ENCODE measurements at regions of chr2 and their contacts with region 1.

Region 1: DNA sequence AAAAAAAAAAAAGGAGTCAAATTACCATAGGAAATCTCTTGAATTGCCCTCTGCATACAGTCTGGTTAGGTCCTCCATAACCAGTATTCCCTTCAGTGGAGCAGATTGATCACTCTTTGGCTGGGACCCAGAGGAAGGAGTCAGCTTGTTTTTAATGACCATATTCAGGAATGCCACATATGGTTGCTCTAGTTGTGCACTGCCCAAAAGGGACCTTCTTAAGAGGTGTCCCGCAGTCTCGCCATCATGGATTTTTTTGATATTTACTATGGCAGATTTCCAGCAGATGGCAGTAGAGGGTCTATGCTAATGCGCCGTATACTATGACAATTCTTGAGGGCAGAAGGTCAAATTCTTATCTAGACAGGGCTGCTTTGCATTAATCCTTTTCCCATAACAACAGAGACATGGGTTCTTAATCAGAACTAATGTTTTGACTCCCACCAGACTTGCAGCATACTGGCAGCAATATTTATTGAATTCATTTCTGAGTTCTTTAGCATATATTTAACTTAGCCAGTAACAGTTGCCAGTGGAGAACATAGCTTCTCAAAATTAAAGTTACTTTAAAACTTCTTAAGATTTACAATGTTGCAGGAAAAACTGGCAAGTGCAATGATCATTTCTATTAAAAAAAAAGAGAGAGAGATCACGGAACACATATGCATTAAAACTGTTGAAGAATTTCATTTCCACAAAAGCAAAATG is 31.8 kb upstream of the INPP4A start:
- DNase-seq: no peak
- ATAC-seq: peak; percentile 86
- H3K4me3 Mint-ChIP-seq: no peak overlapping the region
- H3K27ac Mint-ChIP-seq: no peak overlapping the region
- H3K4me1 Mint-ChIP-seq: no peaks in the 10 kb centered on the region
- H3K27me3 Mint-ChIP-seq: peaks cover 2% of the 10 kb centered on the region
- CTCF ChIP-seq: no peak

Region 2: GRCh38 chr2:98444436-98445176 is 31.7 kb after region 1 on chr2 and contains the start of gene INPP4A:
- CTCF ChIA-PET with region 1: no interaction called
- POLR2A ChIA-PET with region 1: no interaction called
- intact Hi-C with region 1: loop called (anchors 2 kb)
- DNase-seq: peak; percentile 79
- ATAC-seq: peak; percentile 93
- H3K4me3 Mint-ChIP-seq: peak within 1 kb of the TSS; percentile 90
- H3K27ac Mint-ChIP-seq: peak within 1 kb of the TSS; percentile 82
- H3K4me1 Mint-ChIP-seq: peaks cover 23% of the 10 kb centered on the region
- H3K27me3 Mint-ChIP-seq: no peaks in the 10 kb centered on the region
- CTCF ChIP-seq: no peak
- total RNA-seq, gene INPP4A: 19.6 and 26.6 TPM in 2 replicates

Region 3: GRCh38 chr2:98518090-98518489 is 105.2 kb after region 1 on chr2:
- CTCF ChIA-PET with region 1: interaction called, 3 read pairs
- POLR2A ChIA-PET with region 1: no interaction called
- intact Hi-C with region 1: loop called (anchors 1 kb)
- DNase-seq: no peak
- ATAC-seq: peak; percentile 61
- H3K4me3 Mint-ChIP-seq: no peak overlapping the region
- H3K27ac Mint-ChIP-seq: no peak overlapping the region
- H3K4me1 Mint-ChIP-seq: no peaks in the 10 kb centered on the region
- H3K27me3 Mint-ChIP-seq: no peaks in the 10 kb centered on the region
- CTCF ChIP-seq: no peak

Region 4: DNA sequence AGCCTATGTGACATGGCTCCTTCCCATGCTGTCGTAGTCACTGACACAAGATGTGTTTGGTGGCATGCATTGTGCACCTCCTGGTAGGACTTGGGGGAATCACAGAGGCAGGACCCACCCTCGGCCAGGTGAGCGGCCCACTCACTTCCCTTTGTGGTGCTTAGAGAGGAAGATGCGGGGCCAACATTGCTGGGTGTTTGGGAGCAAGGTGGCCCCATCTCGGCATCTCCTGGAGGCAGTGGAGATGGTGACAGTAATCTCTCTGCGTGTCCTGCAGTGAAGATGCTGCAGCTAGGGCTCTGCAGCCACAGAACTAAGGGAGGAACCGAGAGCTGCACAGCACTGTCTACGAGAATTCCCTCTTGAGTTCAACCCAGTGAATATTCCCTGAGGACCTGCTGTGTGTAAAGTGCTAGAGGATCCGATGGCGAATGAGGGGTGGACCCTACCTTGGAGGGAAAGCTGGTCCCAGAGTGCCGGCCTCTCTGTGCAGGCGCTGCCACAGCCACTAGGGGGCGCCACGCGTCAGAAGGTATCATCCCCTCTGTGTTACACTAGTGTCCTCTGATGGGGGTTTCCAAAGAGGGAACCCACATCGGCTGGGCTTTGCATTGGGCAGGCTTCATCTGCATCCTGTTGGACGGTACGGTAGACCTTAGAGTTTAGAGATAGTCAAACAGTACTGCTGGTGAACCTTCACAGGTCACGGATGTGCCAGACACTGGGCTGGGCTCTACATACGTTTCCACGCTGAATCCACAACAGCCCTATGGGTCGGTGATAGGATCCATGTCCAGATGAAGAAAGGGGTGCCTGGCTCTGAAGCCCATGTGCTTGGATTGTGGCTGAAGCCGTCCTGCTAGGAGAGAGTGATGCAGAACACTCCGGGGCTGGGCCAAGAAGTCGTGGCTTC is 156.2 kb after region 1 on chr2:
- CTCF ChIA-PET with region 1: interaction called, 9 read pairs
- POLR2A ChIA-PET with region 1: no interaction called
- intact Hi-C with region 1: loop called (anchors 1 kb)
- DNase-seq: peak; percentile 57
- ATAC-seq: peak; percentile 82
- H3K4me3 Mint-ChIP-seq: no peak overlapping the region
- H3K27ac Mint-ChIP-seq: no peak overlapping the region
- H3K4me1 Mint-ChIP-seq: no peaks in the 10 kb centered on the region
- H3K27me3 Mint-ChIP-seq: no peaks in the 10 kb centered on the region
- CTCF ChIP-seq: no peak

Region 5: DNA sequence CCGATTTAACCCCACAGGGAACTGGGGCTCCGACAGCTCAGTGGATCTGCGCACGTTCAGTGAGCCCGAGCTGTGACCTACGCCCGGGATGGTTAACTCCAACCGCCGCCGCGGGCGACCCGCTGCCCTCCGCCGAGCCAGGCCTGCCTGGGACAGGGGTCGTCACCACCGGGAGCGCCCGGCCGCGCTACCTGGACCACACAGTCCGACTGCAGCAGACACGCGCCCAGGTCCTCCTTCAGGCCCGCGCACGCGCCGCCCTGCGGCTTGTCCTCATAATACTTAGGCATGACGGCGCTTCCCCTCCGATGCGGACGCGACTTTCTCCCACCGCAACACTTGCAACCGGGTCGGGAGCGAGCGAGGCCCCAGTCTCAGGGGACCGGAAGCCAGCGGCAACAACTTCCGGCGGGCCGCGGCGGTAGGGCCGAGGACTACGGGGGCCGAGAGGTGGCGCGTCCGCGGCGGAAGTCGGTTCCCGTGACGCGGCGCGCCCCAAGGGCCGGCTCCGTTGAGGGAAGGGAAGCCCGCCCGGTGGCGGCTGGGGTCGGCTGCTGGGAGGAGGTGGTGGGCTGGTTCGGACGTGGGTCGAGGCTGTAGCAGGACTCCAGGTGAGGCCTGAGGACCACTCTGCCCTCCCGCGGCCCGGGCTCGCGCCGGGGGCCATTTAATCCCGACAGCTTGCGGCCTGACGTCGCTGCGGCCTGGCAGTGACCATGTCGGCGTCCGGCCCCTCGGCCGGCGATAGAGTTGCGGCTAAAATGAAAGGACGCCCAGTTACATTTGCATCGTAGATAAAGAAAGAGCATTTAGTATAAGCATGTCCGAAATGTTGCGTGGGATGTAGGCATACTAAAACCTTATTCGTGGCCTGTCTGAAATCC is 195.5 kb after region 1 on chr2 and contains the starts of genes COA5 and UNC50:
- CTCF ChIA-PET with region 1: interaction called, 29 read pairs
- POLR2A ChIA-PET with region 1: no interaction called
- intact Hi-C with region 1: loop called (anchors 2 kb)
- DNase-seq: peak; percentile 88
- ATAC-seq: peak; percentile 91
- H3K4me3 Mint-ChIP-seq: peak within 1 kb of the TSS; percentile 93
- H3K27ac Mint-ChIP-seq: peak within 1 kb of the TSS; percentile 86
- H3K4me1 Mint-ChIP-seq: peaks cover 55% of the 10 kb centered on the region
- H3K27me3 Mint-ChIP-seq: no peaks in the 10 kb centered on the region
- CTCF ChIP-seq: no peak
- total RNA-seq, gene COA5: 31.5 and 37.6 TPM in 2 replicates
- total RNA-seq, gene UNC50: 35.3 and 36.3 TPM in 2 replicates

Region 6: DNA sequence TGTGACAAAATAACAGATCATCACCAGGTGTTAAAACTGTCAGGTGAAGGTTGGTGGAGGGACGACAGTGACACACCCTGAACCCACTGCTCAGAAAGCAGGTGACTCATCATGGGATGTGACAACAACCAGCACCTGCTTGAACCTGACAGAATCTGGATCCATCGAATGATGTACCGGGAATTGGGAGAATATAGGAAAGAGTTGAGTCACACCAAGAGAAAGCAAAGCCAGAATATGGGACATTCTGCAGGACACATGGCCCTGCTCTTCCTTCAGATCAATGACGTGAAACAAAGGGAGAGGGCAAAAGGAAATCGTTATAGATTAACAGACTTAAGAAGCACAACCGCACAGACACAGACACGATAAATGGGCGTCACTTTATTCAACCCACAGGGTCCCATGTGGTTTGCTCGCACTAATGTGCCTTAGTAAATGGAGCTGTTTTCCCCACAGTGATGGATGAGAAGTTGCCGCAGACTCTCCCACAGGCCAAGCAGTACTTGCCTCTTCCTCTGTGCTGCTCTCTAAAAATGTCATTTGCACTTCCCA is 423.0 kb after region 1 on chr2:
- CTCF ChIA-PET with region 1: no interaction called
- POLR2A ChIA-PET with region 1: no interaction called
- intact Hi-C with region 1: loop called (anchors 1 kb)
- DNase-seq: no peak
- ATAC-seq: peak; percentile 18
- H3K4me3 Mint-ChIP-seq: no peak overlapping the region
- H3K27ac Mint-ChIP-seq: no peak overlapping the region
- H3K4me1 Mint-ChIP-seq: peaks cover 6% of the 10 kb centered on the region
- H3K27me3 Mint-ChIP-seq: no peaks in the 10 kb centered on the region
- CTCF ChIP-seq: no peak